Sigmoid colon (tissue), 7 donors: ENCODE measurements at regions of chr2 and their contacts with region 1.

Region 1: GRCh38 chr2:176653479-176654443 is 384.5 kb downstream of the MTX2 start:
- DNase-seq: peak; percentile 81
- H3K4me3 ChIP-seq: no peak overlapping the region
- H3K27ac ChIP-seq: peak overlapping the region in 2 of 4 donors; percentile 42 to 47
- H3K4me1 ChIP-seq: peaks cover 0 to 12% (median 5%) of the 10 kb centered on the region in 4 donors
- H3K27me3 ChIP-seq: no peaks in the 10 kb centered on the region
- CTCF ChIP-seq: peak; percentile 44 to 78 (median 52)
- EP300 ChIP-seq: no peak
- POLR2A ChIP-seq: no peak

Region 2: GRCh38 chr2:176419591-176420071 is 234.1 kb before region 1 on chr2:
- intact Hi-C with region 1: no loop called
- DNase-seq: no peak
- H3K4me3 ChIP-seq: no peak overlapping the region
- H3K27ac ChIP-seq: no peak overlapping the region
- H3K4me1 ChIP-seq: no peaks in the 10 kb centered on the region
- H3K27me3 ChIP-seq: no peaks in the 10 kb centered on the region
- CTCF ChIP-seq: no peak
- EP300 ChIP-seq: no peak
- POLR2A ChIP-seq: no peak

Region 3: DNA sequence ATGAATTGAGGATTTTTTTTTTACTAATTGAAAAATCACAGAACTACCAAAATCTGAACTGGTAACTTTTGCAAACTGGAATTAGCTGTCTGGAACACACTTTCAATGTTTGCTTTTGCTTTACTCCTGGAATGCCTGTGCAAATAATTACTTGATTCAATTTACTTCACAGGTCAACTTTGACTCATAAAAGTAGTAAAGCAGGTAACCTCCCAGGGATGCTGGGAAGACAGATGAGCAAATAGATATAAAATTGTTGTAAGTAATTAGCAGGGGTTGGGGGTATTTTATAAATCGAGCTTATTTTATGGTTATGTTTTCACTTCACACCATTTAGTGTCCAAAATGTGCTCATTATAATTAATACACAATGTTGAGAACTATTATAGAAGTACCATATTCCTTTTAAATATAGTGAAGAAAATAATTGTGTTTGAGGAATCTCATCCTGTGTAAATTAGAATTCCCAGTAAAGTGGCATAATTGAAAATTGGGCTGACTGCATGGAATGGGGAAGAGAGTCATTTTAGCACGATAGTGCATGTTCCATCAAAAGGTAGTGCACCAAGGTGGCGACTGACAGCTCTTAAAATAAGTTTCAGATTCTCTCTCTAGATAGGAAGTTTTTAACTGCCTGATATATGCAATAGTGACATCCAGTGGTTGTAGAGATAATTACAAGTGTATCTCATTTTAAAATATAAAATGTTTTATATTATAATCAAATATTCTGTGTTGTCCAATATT is 160.7 kb after region 1 on chr2:
- intact Hi-C with region 1: loop called (anchors 5 kb)
- DNase-seq: no peak
- H3K4me3 ChIP-seq: no peak overlapping the region
- H3K27ac ChIP-seq: no peak overlapping the region
- H3K4me1 ChIP-seq: peaks cover 0 to 6% (median 2%) of the 10 kb centered on the region in 4 donors
- H3K27me3 ChIP-seq: no peaks in the 10 kb centered on the region
- CTCF ChIP-seq: peak in 3 of 4 experiments; percentile 32 to 65 (median 34)
- EP300 ChIP-seq: no peak
- POLR2A ChIP-seq: no peak